ENCODE measurements at regions of chr10 and their contacts with region 1.

Region 1: DNA sequence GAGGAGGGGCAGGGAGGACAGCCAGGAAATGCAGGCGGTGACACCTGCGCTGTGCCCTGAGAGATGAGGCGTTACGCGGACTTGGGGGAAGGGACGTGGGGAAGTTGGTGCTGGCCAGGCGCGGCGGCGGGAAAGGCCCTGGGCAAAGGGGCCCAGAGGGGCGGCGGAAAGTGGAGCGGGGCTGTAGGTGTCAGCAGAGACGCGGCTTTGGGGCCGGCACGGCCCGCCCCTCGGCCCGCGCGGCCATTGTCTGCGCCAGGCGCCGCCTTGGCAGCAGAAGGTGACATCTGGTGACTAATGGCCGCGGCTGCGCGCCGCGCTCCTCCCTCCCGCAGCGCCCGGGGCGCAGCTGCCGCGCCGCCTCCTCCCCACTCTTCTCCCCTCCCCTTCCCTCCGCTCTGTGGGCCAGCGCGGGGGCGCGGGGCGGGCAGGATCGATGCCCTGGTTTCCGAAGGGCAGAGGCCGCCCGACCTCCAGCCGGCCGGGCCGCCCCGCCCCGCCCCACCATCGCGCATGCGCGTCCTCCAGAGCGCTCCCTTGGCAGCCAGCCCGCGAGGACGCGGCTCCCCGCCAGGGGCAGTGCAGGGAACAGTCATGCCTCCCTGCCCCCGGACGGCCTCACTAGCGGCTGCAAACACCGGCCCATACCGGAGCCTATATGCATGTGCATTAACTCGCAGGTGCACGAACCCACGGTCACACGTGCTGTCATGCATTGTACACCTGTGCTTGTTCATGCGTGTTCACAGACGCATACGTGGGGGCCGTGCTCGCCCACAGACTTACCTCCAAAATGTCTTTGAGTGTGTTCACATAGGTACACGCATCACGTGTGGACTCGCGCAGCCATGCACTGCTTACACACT is 269.6 kb downstream of the RPS24 start:
- DNase-seq: peak; percentile 93 to 97
- ATAC-seq: peak; percentile 94 to 99 (median 97)
- H3K4me3 ChIP-seq: peak overlapping the region; percentile 33 to 70 (median 59)
- H3K27ac ChIP-seq: peak overlapping the region; percentile 68 to 97 (median 88)
- H3K4me1 ChIP-seq: peaks cover 3 to 28% (median 11%) of the 10 kb centered on the region in 9 donors
- H3K27me3 ChIP-seq: no peaks in the 10 kb centered on the region
- CTCF ChIP-seq: peak; percentile 60 to 78 (median 71)

Region 2: GRCh38 chr10:78047314-78047891 is 255.8 kb before region 1 on chr10:
- intact Hi-C with region 1: loop called in 8 of 10 experiments (anchors 5 to 10 kb)
- DNase-seq: peak; percentile 85 to 87
- ATAC-seq: peak; percentile 72 to 91 (median 87)
- H3K4me3 ChIP-seq: no peak overlapping the region
- H3K27ac ChIP-seq: no peak overlapping the region
- H3K4me1 ChIP-seq: peaks cover 0 to 19% (median 12%) of the 10 kb centered on the region in 9 donors
- H3K27me3 ChIP-seq: no peaks in the 10 kb centered on the region
- CTCF ChIP-seq: peak; percentile 80 to 93 (median 90)

Region 3: GRCh38 chr10:78053211-78053868 is 249.9 kb before region 1 on chr10:
- intact Hi-C with region 1: loop called in 8 of 10 experiments (anchors 5 to 10 kb)
- DNase-seq: no peak
- ATAC-seq: peak in 4 of 8 donors; percentile 24 to 52 (median 42)
- H3K4me3 ChIP-seq: no peak overlapping the region
- H3K27ac ChIP-seq: no peak overlapping the region
- H3K4me1 ChIP-seq: peaks cover 0 to 10% (median 0%) of the 10 kb centered on the region in 9 donors
- H3K27me3 ChIP-seq: no peaks in the 10 kb centered on the region
- CTCF ChIP-seq: no peak

Region 4: GRCh38 chr10:78211561-78212051 is 91.6 kb before region 1 on chr10:
- intact Hi-C with region 1: loop called in 3 of 10 experiments (anchors 1 to 5 kb)
- DNase-seq: peak in 1 of 2 donors; percentile 39
- ATAC-seq: peak in 5 of 8 donors; percentile 1 to 40 (median 9)
- H3K4me3 ChIP-seq: no peak overlapping the region
- H3K27ac ChIP-seq: peak overlapping the region in 4 of 10 donors; percentile 1 to 56 (median 12)
- H3K4me1 ChIP-seq: peaks cover 20 to 40% (median 25%) of the 10 kb centered on the region in 9 donors
- H3K27me3 ChIP-seq: no peaks in the 10 kb centered on the region
- CTCF ChIP-seq: peak; percentile 19 to 66 (median 51)

Region 5: DNA sequence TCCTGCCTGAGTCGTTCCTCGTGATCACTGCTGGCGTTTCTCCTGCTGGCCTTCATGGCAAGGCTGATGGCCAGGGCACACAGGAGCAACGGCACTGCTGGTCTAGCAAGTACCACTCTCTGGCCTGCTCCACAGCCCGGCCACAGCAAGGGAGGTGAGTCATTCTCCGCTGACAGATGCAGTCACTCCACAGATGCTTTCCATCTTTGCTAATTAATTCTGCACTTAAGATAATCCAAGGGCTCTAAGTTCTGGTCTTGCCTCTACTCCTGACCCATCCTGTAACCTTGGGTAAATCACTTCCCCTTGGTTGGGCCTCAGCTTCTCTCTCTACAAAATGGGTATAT is 25.2 kb before region 1 on chr10:
- intact Hi-C with region 1: no loop called
- DNase-seq: peak; percentile 67 to 76
- ATAC-seq: peak; percentile 68 to 98 (median 93)
- H3K4me3 ChIP-seq: no peak overlapping the region
- H3K27ac ChIP-seq: peak overlapping the region in 1 of 10 donors; percentile 30
- H3K4me1 ChIP-seq: peaks cover 0 to 6% (median 0%) of the 10 kb centered on the region in 9 donors
- H3K27me3 ChIP-seq: no peaks in the 10 kb centered on the region
- CTCF ChIP-seq: no peak

Region 6: GRCh38 chr10:78407009-78407711 is 103.9 kb after region 1 on chr10:
- intact Hi-C with region 1: loop called in 1 of 10 experiments (anchors 5 kb)
- DNase-seq: peak; percentile 78 to 87
- ATAC-seq: peak; percentile 50 to 75 (median 60)
- H3K4me3 ChIP-seq: peak overlapping the region in 8 of 10 donors; percentile 32 to 45 (median 40)
- H3K27ac ChIP-seq: peak overlapping the region in 9 of 10 donors; percentile 69 to 91 (median 84)
- H3K4me1 ChIP-seq: peaks cover 19 to 46% (median 35%) of the 10 kb centered on the region in 9 donors
- H3K27me3 ChIP-seq: peaks cover 0 to 18% (median 0%) of the 10 kb centered on the region in 7 donors
- CTCF ChIP-seq: no peak

Region 7: GRCh38 chr10:78588194-78588811 is 285.1 kb after region 1 on chr10:
- intact Hi-C with region 1: loop called in 1 of 10 experiments (anchors 5 kb)
- DNase-seq: peak; percentile 52 to 76
- ATAC-seq: peak; percentile 89 to 97 (median 94)
- H3K4me3 ChIP-seq: no peak overlapping the region
- H3K27ac ChIP-seq: peak overlapping the region in 7 of 10 donors; percentile 32 to 83 (median 63)
- H3K4me1 ChIP-seq: peaks cover 0 to 39% (median 25%) of the 10 kb centered on the region in 9 donors
- H3K27me3 ChIP-seq: no peaks in the 10 kb centered on the region
- CTCF ChIP-seq: no peak

Region 8: GRCh38 chr10:78657163-78657861 is 354.1 kb after region 1 on chr10:
- intact Hi-C with region 1: loop called in 1 of 10 experiments (anchors 10 kb)
- DNase-seq: peak; percentile 68 to 74
- ATAC-seq: peak; percentile 78 to 94 (median 90)
- H3K4me3 ChIP-seq: no peak overlapping the region
- H3K27ac ChIP-seq: no peak overlapping the region
- H3K4me1 ChIP-seq: peaks cover 0 to 5% (median 0%) of the 10 kb centered on the region in 9 donors
- H3K27me3 ChIP-seq: peaks cover 0 to 3% (median 0%) of the 10 kb centered on the region in 7 donors
- CTCF ChIP-seq: peak; percentile 49 to 82 (median 71)

Region 9: DNA sequence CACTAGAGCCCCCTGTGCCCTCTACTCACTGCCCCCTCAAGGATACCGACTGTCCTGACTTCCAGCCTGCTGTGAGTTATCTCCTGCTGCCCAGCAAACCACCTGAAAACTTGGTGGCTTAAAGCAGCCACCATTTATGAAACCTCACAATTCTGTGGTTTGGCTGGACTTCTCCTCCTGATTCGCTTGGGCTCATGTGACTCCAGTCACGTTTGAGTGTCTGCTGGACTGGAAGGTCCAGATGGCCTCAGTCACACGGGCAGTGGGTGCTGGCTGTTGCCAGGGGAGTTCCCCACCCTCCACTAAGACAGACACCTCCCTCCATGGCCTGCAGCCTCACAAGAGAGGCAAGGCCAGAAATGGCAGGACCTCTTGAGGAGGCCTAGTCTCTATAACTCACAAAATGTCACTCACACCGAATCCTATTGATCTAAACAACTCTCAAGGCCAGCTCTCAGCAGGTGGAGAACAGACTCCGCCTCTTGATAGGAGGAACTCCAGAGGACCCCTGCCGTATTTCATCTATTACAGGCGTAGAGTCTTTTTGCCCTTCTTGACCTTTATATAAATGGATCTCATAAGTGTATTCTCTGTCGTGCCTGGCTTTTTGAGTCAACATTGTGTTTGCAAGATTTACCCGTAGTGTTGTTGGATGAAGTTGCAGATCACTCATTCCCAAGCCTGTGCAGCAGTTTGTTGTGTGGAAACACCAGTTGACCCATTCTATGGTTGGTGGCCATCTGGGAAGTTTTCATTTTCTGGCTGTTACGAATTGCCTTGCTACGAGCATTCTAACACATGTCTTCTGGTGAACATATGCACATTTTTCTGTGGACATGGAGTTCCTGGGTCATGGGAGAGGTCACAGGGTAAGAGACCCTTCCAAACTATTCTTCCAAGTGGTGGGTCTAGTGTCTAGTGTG is 813.8 kb after region 1 on chr10:
- intact Hi-C with region 1: no loop called
- DNase-seq: peak in 1 of 2 donors; percentile 59
- ATAC-seq: peak in 5 of 8 donors; percentile 15 to 35 (median 23)
- H3K4me3 ChIP-seq: no peak overlapping the region
- H3K27ac ChIP-seq: peak overlapping the region in 8 of 10 donors; percentile 2 to 76 (median 62)
- H3K4me1 ChIP-seq: peaks cover 45 to 97% (median 82%) of the 10 kb centered on the region in 9 donors
- H3K27me3 ChIP-seq: no peaks in the 10 kb centered on the region
- CTCF ChIP-seq: no peak

Region 10: DNA sequence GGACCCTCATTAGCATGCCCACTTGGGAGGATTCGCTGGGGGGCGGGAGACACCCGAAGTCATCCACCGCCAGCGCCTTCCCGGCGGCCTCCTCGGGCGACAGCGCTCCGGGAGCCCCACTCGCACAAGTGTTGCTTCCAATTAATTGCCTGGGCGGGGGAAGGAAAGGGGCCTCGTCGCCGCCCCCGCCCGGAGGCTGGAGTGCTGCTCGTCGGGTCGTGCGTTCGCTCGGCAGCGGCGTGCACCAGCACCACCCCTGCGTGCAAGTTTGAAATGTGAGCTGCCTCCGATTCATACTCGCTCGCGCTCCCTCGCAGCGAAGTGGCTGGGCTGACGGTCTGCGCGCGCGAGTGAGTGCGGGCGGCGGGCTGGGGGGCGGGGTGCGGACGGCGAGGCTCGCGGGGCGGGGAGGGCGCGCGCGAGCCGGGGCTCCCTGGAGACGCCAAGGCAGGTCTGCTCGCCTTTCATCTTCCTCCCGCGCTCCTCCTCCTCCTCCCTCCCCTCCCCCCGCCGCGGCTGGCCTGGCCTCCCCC is 939.5 kb after region 1 on chr10:
- intact Hi-C with region 1: no loop called
- DNase-seq: peak; percentile 59 to 68
- ATAC-seq: peak; percentile 4 to 55 (median 33)
- H3K4me3 ChIP-seq: peak overlapping the region; percentile 18 to 70 (median 54)
- H3K27ac ChIP-seq: peak overlapping the region; percentile 59 to 95 (median 88)
- H3K4me1 ChIP-seq: peaks cover 69 to 93% (median 88%) of the 10 kb centered on the region in 9 donors
- H3K27me3 ChIP-seq: no peaks in the 10 kb centered on the region
- CTCF ChIP-seq: no peak